HEK293 (cell line): ENCODE measurements at regions of chr1 and their contacts with region 1.

Region 1: GRCh38 chr1:59879574-59879973 is 47.0 kb downstream of the CYP2J2 start:
- H3K4me3 ChIP-seq: no peak overlapping the region
- H3K27ac ChIP-seq: no peak overlapping the region
- H3K4me1 ChIP-seq: no peaks in the 10 kb centered on the region
- CTCF ChIP-seq: no peak

Region 2: GRCh38 chr1:59484096-59484495 is 395.5 kb before region 1 on chr1:
- CTCF ChIA-PET with region 1: no interaction called
- POLR2A ChIA-PET with region 1: no interaction called
- H3K4me3 ChIP-seq: no peak overlapping the region
- H3K27ac ChIP-seq: no peak overlapping the region
- H3K4me1 ChIP-seq: 0 out of 2 replicates have a peak, but pooled peaks cover 2% of the 10 kb centered on the region
- CTCF ChIP-seq: no peak

Region 3: GRCh38 chr1:59692591-59692990 is 187.0 kb before region 1 on chr1:
- CTCF ChIA-PET with region 1: no interaction called
- POLR2A ChIA-PET with region 1: no interaction called
- H3K4me3 ChIP-seq: no peak overlapping the region
- H3K27ac ChIP-seq: no peak overlapping the region
- H3K4me1 ChIP-seq: no peaks in the 10 kb centered on the region; the same call in 1 of the 2 replicates
- CTCF ChIP-seq: no peak

Region 4: DNA sequence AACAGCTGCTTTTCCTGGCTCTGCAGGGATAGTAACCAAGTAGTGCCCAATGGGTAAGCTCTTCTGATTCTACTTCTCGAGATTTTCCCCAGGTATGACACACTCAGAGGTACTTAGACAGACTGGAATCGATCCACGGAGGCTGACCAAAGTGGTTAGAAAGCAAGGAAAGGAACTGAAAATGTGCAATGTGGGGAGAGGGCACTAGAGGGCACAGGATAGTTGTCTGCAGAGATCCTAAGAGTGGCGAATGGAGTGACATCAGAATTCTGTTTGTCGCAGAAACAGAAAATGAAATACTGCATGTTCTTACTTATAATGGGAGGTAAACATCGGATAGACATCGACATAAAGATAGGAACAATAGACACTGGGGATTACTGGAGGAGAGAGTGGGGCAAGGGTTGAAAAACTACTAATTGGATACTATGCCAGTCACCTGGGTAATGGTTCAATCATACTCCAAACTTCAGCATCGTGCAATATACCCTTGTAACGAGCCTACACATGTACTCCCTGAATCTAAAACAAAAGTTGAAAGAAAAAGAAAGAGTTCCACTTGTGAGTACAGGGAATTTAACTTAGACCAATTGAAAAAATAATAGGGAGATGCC is 23.7 kb after region 1 on chr1:
- CTCF ChIA-PET with region 1: interaction called, 33 read pairs
- POLR2A ChIA-PET with region 1: no interaction called
- H3K4me3 ChIP-seq: no peak overlapping the region
- H3K27ac ChIP-seq: no peak overlapping the region
- H3K4me1 ChIP-seq: no peaks in the 10 kb centered on the region
- CTCF ChIP-seq: peak; percentile 41; the same call in 1 of the 2 replicates